ENCODE measurements at regions of chr16 and their contacts with region 1.

Region 1: GRCh38 chr16:27273670-27274423 is 5.3 kb upstream of the NSMCE1 start:
- DNase-seq: no peak
- H3K4me3 ChIP-seq: no peak overlapping the region
- H3K27ac ChIP-seq: no peak overlapping the region
- H3K4me1 ChIP-seq: no peaks in the 10 kb centered on the region
- H3K27me3 ChIP-seq: no peaks in the 10 kb centered on the region
- CTCF ChIP-seq: no peak

Region 2: DNA sequence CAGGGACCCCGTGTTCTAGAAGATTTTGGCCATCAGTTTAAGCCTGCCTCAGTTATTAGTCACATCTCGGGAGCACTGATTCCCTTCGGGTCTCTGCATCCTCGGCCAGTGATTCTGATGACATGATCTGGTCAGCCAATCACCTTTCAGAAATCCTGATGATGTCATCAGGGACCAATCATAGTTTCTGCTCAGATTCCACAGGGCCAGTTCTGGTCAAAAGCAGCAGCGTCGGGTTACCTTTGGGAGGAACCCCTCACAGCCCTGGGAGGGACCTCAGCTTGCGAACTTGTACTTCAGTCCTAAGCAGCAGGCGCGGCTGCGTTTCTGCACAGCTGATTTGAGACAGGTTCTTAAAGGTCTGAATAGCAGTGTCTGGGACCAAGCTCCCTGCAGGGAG is 56.6 kb before region 1 on chr16:
- CTCF ChIA-PET with region 1: no interaction called
- dilution Hi-C with region 1: loop called (anchors 5 kb)
- in situ Hi-C with region 1: no loop called
- intact Hi-C with region 1: no loop called
- DNase-seq: no peak
- H3K4me3 ChIP-seq: no peak overlapping the region
- H3K27ac ChIP-seq: no peak overlapping the region
- H3K4me1 ChIP-seq: no peaks in the 10 kb centered on the region
- H3K27me3 ChIP-seq: no peaks in the 10 kb centered on the region
- CTCF ChIP-seq: no peak

Region 3: DNA sequence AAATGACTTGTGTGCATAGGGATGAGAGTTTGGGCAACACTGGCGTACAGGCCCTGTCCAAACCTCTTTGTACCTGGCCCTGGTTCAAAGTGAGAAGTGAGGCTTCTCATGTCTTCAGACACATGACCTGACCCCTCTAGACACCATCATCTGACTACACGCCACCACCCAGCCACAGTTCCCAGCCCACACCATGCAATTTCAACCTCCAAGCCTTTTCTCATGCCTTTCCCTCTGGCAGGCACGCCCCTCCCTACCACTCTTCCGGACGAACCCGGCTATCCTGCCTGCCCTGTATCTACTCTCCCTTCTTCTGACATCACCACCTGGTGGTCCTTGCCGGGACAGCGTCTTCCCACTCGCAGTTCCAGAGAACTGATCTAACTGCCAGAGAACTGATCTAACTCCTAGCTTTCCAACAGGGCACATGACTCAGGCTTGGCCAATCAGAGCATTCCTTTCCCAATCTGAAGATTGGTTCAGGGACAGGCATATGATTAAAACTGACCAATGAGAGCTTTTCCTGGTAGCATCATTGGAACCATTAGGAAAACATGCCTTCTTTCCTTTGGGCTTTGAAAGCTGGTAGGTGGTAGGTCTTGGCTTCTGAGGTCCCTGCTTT is 101.1 kb after region 1 on chr16:
- CTCF ChIA-PET with region 1: no interaction called
- dilution Hi-C with region 1: loop called (anchors 5 kb)
- in situ Hi-C with region 1: no loop called
- intact Hi-C with region 1: no loop called
- DNase-seq: peak; percentile 72
- H3K4me3 ChIP-seq: no peak overlapping the region
- H3K27ac ChIP-seq: no peak overlapping the region
- H3K4me1 ChIP-seq: no peaks in the 10 kb centered on the region
- H3K27me3 ChIP-seq: no peaks in the 10 kb centered on the region
- CTCF ChIP-seq: peak; percentile 45 to 47

Measured in mammary epithelial cell (primary cell).